Adrenal gland (tissue), 19 donors: ENCODE measurements at regions of chr7 and their contacts with region 1.

Region 1: DNA sequence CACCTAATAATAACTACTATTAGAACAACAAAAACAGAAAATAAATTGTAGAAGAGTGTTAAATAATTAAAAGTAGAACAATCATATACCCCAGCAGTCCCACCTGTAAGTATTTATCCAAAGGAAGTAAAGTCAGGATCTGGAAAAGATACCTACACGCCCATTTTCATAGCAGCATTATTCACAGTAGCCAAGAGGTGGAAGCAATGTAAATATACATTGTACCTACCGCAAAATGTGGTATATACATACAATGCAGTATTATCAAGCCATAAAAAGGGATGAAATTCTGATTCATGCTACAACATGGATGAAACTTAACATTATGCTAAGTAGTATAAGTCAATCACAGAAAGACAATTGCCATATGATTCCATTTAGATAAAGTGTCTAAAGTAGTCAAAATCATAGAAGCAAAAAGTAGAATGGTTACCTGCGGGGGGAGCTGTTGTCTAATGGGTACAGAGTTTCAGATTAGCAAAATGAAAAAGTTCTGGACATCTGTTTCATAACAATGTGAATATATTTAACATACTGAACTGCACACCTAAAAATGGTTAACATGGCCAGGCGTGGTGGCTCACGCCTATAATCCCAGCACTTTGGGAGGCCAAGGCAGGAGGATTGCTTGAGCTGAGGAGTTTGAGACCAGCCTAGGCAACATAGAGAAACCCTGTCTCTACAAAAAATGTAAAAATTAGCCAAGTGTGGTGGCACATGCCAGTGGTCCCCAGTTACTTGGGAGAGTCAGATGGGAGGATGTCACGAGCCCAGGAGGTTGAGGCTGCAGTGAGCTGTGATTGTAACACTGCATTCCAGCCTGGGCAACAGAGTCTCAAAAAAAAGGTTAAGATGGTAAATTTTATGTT is 6.0 kb upstream of the TMED4 start:
- DNase-seq: peak; percentile 51 to 81 (median 64)
- H3K4me3 ChIP-seq: no peak overlapping the region
- H3K27ac ChIP-seq: no peak overlapping the region
- H3K4me1 ChIP-seq: peaks cover 0 to under 1% of the 10 kb centered on the region in 2 donors
- H3K27me3 ChIP-seq: no peaks in the 10 kb centered on the region
- CTCF ChIP-seq: peak; percentile 46 to 79 (median 67)
- POLR2A ChIP-seq: no peak

Region 2: DNA sequence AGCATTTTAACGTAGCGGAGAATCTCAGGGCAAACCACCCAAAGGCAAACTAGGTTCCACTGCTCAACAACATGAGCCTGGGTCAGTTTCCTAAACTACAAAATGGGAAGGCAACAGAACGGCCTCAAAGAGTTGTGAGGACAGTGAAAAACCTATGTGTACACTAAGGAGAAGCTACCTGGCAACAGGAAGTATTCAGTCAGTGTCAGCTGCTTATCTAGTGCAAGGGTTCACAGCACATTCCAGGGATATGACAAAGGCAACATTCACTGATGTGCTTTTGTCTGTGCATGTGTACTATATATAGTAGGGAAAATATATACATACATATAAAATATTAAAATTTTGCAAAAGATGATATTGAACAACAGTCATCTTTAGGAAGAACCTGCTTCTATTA is 114.8 kb before region 1 on chr7:
- intact Hi-C with region 1: no loop called
- DNase-seq: no peak
- H3K4me3 ChIP-seq: no peak overlapping the region
- H3K27ac ChIP-seq: no peak overlapping the region
- H3K4me1 ChIP-seq: peaks cover 26 to 45% of the 10 kb centered on the region in 2 donors
- H3K27me3 ChIP-seq: no peaks in the 10 kb centered on the region
- CTCF ChIP-seq: no peak
- POLR2A ChIP-seq: no peak

Region 3: DNA sequence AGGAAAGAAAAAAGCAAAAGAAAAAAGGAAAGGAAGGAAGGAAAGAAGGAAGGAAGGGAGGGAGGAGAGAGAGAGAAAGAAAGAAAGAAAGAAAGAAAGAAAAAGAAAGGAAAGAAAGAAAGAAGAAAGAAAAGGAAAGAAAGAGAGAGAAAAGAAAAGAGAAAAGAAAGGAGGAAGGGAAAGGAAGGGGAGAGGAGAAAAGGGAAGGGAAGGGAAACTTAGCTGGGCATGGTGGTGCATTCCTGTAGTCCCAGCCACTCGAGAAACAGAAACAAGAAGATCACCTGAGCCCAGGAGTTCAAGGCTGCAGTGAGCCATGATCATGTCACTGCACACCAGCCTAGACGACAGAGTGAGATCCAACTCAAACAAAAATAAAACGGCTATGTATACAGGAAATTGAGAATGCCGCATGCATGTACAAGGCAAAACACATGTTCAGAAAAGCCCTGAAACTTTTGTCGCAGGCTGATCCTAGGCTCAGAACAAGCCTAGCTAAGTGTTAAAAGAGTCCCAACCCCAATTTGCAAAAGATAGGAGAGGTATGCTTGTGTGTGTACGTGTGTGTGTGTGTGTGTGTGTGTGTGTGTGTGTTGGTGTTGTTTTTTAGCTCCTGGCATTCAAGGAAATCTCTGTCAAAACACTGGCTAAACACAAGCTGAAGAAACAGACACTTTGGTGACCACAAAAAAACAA is 40.4 kb before region 1 on chr7:
- intact Hi-C with region 1: no loop called
- DNase-seq: no peak
- H3K4me3 ChIP-seq: no peak overlapping the region
- H3K27ac ChIP-seq: no peak overlapping the region
- H3K4me1 ChIP-seq: peaks cover 0 to 9% of the 10 kb centered on the region in 2 donors
- H3K27me3 ChIP-seq: no peaks in the 10 kb centered on the region
- CTCF ChIP-seq: no peak
- POLR2A ChIP-seq: no peak

Region 4: GRCh38 chr7:44847508-44847920 is 259.4 kb after region 1 on chr7:
- intact Hi-C with region 1: loop called (anchors 5 kb)
- DNase-seq: peak; percentile 87 to 94 (median 91)
- H3K4me3 ChIP-seq: peak overlapping the region; percentile 24 to 83 (median 51)
- H3K27ac ChIP-seq: peak overlapping the region; percentile 91 to 100 (median 94)
- H3K4me1 ChIP-seq: peaks cover 4 to 41% of the 10 kb centered on the region in 2 donors
- H3K27me3 ChIP-seq: no peaks in the 10 kb centered on the region
- CTCF ChIP-seq: peak; percentile 54 to 94 (median 80)
- POLR2A ChIP-seq: no peak

Region 5: GRCh38 chr7:45068236-45069023 is 480.4 kb after region 1 on chr7:
- intact Hi-C with region 1: no loop called
- DNase-seq: peak in 1 of 7 donors; percentile 35
- H3K4me3 ChIP-seq: no peak overlapping the region
- H3K27ac ChIP-seq: no peak overlapping the region
- H3K4me1 ChIP-seq: no peaks in the 10 kb centered on the region
- H3K27me3 ChIP-seq: no peaks in the 10 kb centered on the region
- CTCF ChIP-seq: no peak
- POLR2A ChIP-seq: no peak